ENCODE measurements at regions of chr5 and their contacts with region 1.

Region 1: DNA sequence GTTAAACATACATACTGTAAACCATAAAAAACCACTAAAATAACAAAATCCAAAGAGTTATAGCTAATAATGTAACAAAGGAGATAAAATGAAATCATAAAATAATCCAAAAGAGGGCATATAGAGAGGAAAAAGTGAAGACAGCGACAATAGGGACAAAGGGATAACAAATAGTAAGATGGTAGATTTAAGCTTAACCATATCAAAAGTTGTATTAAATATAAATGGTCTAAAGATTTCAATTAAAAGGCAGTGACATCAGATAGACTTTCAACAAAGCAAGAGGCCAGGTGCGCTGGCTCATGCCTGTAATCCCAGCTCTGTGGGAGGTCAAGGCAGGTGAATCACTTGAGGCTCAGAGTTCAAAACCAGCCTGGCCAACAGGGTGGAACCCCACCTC is 54.7 kb upstream of the SREK1 start:
- DNase-seq: no peak
- ATAC-seq: no peak
- H3K4me3 ChIP-seq: no peak overlapping the region
- H3K4me3 Mint-ChIP-seq: no peak overlapping the region
- H3K27ac ChIP-seq: no peak overlapping the region
- H3K27ac Mint-ChIP-seq: no peak overlapping the region
- H3K4me1 ChIP-seq: no peaks in the 10 kb centered on the region
- H3K4me1 Mint-ChIP-seq: no peaks in the 10 kb centered on the region
- H3K27me3 ChIP-seq: no peaks in the 10 kb centered on the region
- H3K27me3 Mint-ChIP-seq: no peaks in the 10 kb centered on the region

Region 2: DNA sequence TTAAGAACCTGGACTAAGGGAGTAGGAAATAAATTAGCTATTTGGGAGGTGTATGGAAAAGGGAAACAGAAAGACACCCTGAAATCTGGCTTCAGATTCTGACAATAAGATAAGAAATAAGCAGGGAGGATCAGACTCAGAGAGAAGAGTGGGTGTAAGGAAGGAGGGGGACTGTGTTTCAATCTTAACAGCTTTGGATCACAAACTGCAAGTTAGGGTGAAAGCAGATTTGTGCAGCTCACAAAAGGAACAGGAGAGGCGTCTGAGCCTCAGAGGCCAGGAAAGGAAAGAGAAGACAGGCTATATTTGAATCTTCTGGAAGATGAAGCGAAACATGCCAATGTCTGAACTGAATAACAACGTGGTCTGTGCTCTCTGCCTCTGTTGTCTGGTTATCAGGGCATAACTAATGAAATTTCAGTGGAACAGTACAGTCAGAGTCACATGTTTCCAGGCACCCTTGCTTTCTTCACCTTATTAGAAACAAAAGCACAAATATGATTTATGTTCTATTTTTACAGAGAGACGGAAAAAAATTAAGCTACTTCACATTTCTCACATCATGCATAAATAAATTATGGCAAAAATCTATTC is 394.1 kb before region 1 on chr5:
- CTCF ChIA-PET with region 1: no interaction called
- POLR2A ChIA-PET with region 1: interaction called in 1 of 2 experiments, 10 read pairs
- DNase-seq: no peak
- ATAC-seq: no peak
- H3K4me3 ChIP-seq: no peak overlapping the region
- H3K4me3 Mint-ChIP-seq: no peak overlapping the region
- H3K27ac ChIP-seq: no peak overlapping the region
- H3K27ac Mint-ChIP-seq: no peak overlapping the region
- H3K4me1 ChIP-seq: no peaks in the 10 kb centered on the region
- H3K4me1 Mint-ChIP-seq: peaks cover 16 to 28% (median 19%) of the 10 kb centered on the region in 3 donors
- H3K27me3 ChIP-seq: no peaks in the 10 kb centered on the region
- H3K27me3 Mint-ChIP-seq: no peaks in the 10 kb centered on the region

Measured in T-cell (primary cell).